ENCODE measurements at regions of chr11 and their contacts with region 1.

Region 1: DNA sequence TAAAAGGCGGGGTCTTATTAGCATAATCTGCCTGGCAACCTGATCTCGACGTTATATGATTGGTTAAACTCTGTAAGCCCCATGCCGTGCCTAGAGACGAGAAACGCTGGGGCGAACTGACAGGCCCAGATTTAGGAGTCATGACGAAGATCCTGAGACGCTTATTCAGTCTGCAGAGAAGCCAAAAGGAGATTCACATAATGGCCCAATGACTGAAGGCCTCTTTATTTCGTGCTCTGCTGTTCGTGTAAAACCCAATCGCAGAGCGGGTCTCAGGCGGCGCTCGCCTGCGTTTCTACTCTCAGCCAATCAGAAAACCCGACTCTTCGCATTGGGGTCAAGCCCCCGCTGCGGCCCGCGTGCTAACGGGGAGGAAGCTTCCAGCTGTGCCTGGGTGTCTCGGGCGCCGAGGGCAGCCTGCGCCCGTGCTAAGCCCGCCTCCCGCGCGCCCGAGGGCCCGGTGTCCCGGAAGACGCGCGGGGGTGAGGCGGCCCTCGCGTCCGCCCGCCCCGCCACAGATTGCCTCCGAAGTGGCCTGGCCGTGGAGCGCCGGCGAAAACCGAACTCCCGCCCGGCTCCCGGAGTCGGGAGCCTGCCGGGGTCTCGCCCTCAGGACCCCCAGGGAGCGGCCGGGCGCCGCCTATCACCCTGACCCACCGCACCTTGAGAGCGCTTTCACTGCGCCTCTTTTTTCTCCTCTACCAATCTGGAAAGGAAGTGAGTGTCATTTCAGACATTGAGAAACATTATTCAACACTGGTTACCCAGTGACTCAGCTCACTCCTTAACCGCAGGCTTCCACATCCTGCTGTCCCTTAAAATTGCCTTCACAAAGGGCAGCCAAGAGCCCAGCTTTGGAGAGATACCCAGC is 446 bp upstream of the PRDM10 start:
- DNase-seq: peak; percentile 91
- ATAC-seq: peak; percentile 81
- H3K4me3 Mint-ChIP-seq: peak overlapping the region; percentile 86
- H3K27ac Mint-ChIP-seq: peak overlapping the region; percentile 100
- H3K4me1 Mint-ChIP-seq: peaks cover 31% of the 10 kb centered on the region
- H3K27me3 Mint-ChIP-seq: no peaks in the 10 kb centered on the region
- CTCF ChIP-seq: no peak

Region 2: GRCh38 chr11:129955282-129955681 is 47.8 kb before region 1 on chr11:
- CTCF ChIA-PET with region 1: no interaction called
- POLR2A ChIA-PET with region 1: no interaction called
- intact Hi-C with region 1: no loop called
- DNase-seq: no peak
- ATAC-seq: no peak
- H3K4me3 Mint-ChIP-seq: no peak overlapping the region
- H3K27ac Mint-ChIP-seq: no peak overlapping the region
- H3K4me1 Mint-ChIP-seq: peaks cover 3% of the 10 kb centered on the region
- H3K27me3 Mint-ChIP-seq: no peaks in the 10 kb centered on the region
- CTCF ChIP-seq: no peak

Region 3: GRCh38 chr11:129992161-129992944 is 10.7 kb before region 1 on chr11:
- CTCF ChIA-PET with region 1: interaction called, 16 read pairs
- POLR2A ChIA-PET with region 1: interaction called, 3 read pairs
- intact Hi-C with region 1: no loop called
- DNase-seq: peak; percentile 71
- ATAC-seq: peak; percentile 95
- H3K4me3 Mint-ChIP-seq: no peak overlapping the region
- H3K27ac Mint-ChIP-seq: no peak overlapping the region
- H3K4me1 Mint-ChIP-seq: peaks cover 11% of the 10 kb centered on the region
- H3K27me3 Mint-ChIP-seq: no peaks in the 10 kb centered on the region
- CTCF ChIP-seq: peak; percentile 34

Region 4: DNA sequence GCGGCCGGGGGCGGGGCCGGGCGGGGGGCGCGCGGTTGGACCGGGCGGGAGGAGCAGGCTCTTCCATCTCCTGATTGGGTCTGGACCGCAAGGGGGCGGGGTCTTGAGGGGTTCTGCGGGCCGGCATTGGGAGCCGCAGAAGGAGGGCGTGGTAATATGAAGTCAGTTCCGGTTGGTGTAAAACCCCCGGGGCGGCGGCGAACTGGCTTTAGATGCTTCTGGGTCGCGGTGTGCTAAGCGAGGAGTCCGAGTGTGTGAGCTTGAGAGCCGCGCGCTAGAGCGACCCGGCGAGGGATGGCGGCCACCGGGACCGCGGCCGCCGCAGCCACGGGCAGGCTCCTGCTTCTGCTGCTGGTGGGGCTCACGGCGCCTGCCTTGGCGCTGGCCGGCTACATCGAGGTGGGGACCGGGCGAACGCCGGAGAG is 66.6 kb after region 1 on chr11 and contains the start of gene APLP2:
- CTCF ChIA-PET with region 1: interaction called, 10 read pairs
- POLR2A ChIA-PET with region 1: interaction called, 4 read pairs
- intact Hi-C with region 1: loop called (anchors 2 kb)
- DNase-seq: peak; percentile 99
- ATAC-seq: peak; percentile 97
- H3K4me3 Mint-ChIP-seq: peak within 1 kb of the TSS; percentile 85
- H3K27ac Mint-ChIP-seq: peak within 1 kb of the TSS; percentile 87
- H3K4me1 Mint-ChIP-seq: peaks cover 20% of the 10 kb centered on the region
- H3K27me3 Mint-ChIP-seq: peaks cover 9% of the 10 kb centered on the region
- CTCF ChIP-seq: no peak
- total RNA-seq, gene APLP2: 25.5 to 29.8 TPM

Region 5: GRCh38 chr11:130118636-130119387 is 115.7 kb after region 1 on chr11:
- CTCF ChIA-PET with region 1: no interaction called
- POLR2A ChIA-PET with region 1: interaction called, 8 read pairs
- intact Hi-C with region 1: loop called (anchors 5 kb)
- DNase-seq: peak; percentile 64
- ATAC-seq: peak; percentile 77
- H3K4me3 Mint-ChIP-seq: no peak overlapping the region
- H3K27ac Mint-ChIP-seq: no peak overlapping the region
- H3K4me1 Mint-ChIP-seq: peaks cover 41% of the 10 kb centered on the region
- H3K27me3 Mint-ChIP-seq: peaks cover 7% of the 10 kb centered on the region
- CTCF ChIP-seq: no peak

Measured in activated CD8-positive, alpha-beta T cell treated with anti-CD3 and anti-CD28 coated beads for 36 hours (primary cell).